ENCODE measurements at regions of chr7 and their contacts with region 1.

Region 1: GRCh38 chr7:11212080-11212711 is 238.5 kb downstream of the PHF14 start:
- DNase-seq: peak; percentile 39
- ATAC-seq: peak; percentile 76

Region 2: DNA sequence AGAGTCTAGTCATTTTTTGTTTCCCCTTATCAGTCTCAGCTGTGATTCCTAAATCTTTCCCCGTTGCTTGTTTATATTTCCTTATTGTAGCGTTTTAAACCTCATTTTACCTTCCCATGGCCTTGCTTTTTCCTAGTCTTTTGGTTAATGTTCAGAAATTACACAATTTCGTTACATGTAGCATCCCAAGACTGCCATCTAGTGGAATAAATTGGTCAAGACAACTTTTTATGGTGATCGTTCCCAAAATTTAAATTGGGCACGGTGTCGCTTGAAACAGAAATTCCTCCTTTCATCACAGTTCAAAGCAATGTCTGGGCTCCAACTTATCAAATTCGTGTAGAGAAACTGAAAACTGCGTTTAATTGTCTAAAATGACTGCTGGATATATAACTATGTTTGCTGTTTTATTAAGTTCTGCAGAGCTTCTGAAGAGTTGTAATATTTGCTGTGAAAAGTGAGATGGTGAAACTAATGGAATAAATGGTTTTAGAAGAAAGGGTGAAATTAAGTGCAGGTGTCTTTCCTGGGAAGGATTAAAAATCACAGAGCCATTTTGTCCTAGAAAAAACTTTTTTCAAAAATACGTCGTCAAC is 131.7 kb after region 1 on chr7:
- intact Hi-C with region 1: loop called (anchors 5 kb)
- DNase-seq: no peak
- ATAC-seq: no peak

Region 3: GRCh38 chr7:11469028-11469745 is 257.0 kb after region 1 on chr7:
- intact Hi-C with region 1: no loop called
- DNase-seq: no peak
- ATAC-seq: no peak